Naive thymus-derived CD4-positive, alpha-beta T cell (primary cell): ENCODE measurements at regions of chrX and their contacts with region 1.

Region 1: GRCh38 chrX:118847676-118848075 is 24.1 kb downstream of the ZCCHC12 start:
- DNase-seq: peak in 7 of 9 donors; percentile 22 to 61 (median 54)
- ATAC-seq: peak; percentile 60
- H3K4me3 ChIP-seq: no peak overlapping the region
- H3K4me3 Mint-ChIP-seq: no peak overlapping the region
- H3K27ac ChIP-seq: no peak overlapping the region
- H3K27ac Mint-ChIP-seq: no peak overlapping the region
- H3K4me1 ChIP-seq: no peaks in the 10 kb centered on the region
- H3K4me1 Mint-ChIP-seq: no peaks in the 10 kb centered on the region
- H3K27me3 ChIP-seq: no peaks in the 10 kb centered on the region
- H3K27me3 Mint-ChIP-seq: peaks cover 0 to 4% (median 2%) of the 10 kb centered on the region in 5 donors

Region 2: DNA sequence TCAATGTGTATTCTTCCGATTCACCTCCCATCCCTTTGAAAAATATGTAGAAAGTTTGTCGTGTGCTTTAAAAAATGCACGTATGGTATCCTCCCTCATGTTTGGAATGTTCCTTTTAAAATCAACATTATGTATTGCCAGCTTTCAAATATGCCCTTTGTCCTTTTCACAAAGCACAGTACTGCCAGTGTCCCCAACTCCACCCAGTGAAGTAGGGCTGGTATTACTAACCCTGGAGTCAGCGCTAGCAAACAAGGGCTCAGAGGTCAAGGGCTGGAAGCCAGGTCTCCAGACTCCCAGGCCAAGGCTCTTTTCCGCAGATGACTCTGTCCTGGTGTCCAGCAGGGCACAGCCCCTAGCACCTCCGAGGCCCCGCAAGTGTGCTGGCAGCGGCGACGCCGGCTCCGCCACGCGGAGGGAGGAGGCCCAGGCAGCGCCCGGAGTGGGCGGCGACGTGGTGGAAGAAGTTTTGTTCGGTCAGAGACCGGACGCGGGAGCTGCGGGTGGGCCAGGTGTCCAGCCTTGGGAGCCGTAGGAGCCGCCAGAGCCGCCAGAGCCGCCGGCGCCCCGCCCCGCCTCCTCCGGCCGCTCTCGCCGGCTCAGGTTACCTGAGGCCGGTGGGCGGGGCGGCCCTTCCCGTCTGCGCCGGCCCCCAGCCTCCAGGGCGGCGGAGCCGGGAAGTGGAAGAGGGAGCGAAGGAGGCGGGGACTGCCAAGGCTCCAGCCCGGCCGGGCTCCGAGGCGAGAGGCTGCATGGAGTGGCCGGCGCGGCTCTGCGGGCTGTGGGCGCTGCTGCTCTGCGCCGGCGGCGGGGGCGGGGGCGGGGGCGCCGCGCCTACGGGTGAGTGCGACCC is 120.6 kb before region 1 on chrX and contains the start of gene IL13RA1:
- CTCF ChIA-PET with region 1: no interaction called
- POLR2A ChIA-PET with region 1: no interaction called
- intact Hi-C with region 1: no loop called
- DNase-seq: peak in 3 of 9 donors; percentile 7 to 36 (median 7)
- ATAC-seq: peak; percentile 60
- H3K4me3 ChIP-seq: no peak within 1 kb of the TSS
- H3K4me3 Mint-ChIP-seq: peak within 1 kb of the TSS; percentile 41 to 81 (median 66)
- H3K27ac ChIP-seq: no peak within 1 kb of the TSS
- H3K27ac Mint-ChIP-seq: peak within 1 kb of the TSS in 1 of 9 donors; percentile 18
- H3K4me1 ChIP-seq: peaks cover 0 to 5% of the 10 kb centered on the region in 2 donors
- H3K4me1 Mint-ChIP-seq: peaks cover 0 to 9% (median 0%) of the 10 kb centered on the region in 7 donors
- H3K27me3 ChIP-seq: peaks cover 0 to 6% of the 10 kb centered on the region in 2 donors
- H3K27me3 Mint-ChIP-seq: peaks cover 12 to 45% (median 22%) of the 10 kb centered on the region in 5 donors
- total RNA-seq, gene IL13RA1: 0.15 to 16.3 (median 1.7) TPM

Region 3: DNA sequence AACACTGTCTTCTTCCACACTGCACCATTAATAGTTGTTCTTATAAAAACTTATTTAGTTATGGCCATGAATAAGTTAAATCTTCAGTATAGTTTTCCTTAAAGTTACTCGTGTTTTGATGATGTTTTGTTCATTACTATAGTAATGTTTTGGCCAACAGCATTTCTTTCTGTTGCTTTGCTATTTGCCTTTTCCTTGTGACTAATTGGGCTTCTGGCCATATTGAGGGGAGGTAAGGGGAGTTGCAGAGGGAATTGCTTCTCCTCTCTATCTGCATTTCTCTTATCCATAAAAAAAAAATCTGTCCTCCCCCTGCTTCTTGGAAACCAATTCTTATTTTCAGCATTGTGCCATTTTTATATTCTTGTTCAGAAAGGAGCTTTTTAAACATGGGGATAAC is 66.8 kb before region 1 on chrX:
- CTCF ChIA-PET with region 1: no interaction called
- POLR2A ChIA-PET with region 1: no interaction called
- intact Hi-C with region 1: no loop called
- DNase-seq: no peak
- ATAC-seq: no peak
- H3K4me3 ChIP-seq: no peak overlapping the region
- H3K4me3 Mint-ChIP-seq: no peak overlapping the region
- H3K27ac ChIP-seq: no peak overlapping the region
- H3K27ac Mint-ChIP-seq: no peak overlapping the region
- H3K4me1 ChIP-seq: no peaks in the 10 kb centered on the region
- H3K4me1 Mint-ChIP-seq: no peaks in the 10 kb centered on the region
- H3K27me3 ChIP-seq: no peaks in the 10 kb centered on the region
- H3K27me3 Mint-ChIP-seq: peaks cover 0 to 4% (median 0%) of the 10 kb centered on the region in 5 donors

Region 4: DNA sequence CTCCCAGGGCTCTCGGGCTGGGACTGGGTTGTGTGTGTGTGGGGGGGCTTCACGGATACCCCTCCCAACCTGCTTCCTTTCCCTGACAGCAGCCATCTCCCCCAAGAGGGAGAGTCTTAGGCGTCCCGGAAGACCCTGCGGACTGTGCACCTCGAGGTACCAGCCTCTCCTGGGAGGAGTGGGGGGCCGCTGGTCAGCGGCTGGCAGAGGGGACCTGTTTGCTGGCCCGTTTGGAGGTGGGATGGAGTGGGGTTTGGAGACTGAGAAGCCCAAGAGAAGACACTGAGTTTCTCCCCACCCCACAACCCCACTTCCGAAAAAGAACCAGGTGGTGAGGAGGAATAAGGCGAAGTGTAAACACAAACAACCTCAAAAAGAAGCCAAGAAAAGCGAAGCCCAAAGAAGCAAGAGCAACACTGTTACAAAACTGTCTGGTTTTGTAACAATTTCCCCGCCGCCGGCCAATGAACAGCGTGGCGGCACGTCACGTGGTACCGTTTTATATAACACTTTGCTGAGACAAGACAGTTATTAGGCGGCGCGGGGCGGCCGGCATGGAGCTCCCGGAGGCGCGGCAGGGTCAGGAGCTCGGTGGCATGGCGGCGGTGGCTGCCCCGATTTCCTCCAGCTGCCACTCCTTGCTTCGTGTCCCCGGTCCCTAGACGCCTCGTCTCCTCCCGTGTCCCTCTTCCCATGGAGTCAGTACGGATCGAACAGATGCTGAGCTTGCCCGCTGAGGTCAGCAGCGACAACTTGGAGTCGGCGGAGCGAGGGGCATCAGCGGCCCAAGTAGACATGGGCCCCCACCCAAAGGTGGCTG is 126.6 kb after region 1 on chrX and contains the start of gene LONRF3:
- CTCF ChIA-PET with region 1: no interaction called
- POLR2A ChIA-PET with region 1: no interaction called
- intact Hi-C with region 1: loop called in 1 of 2 experiments (anchors 10 kb)
- DNase-seq: peak; percentile 26 to 71 (median 56)
- ATAC-seq: peak; percentile 65
- H3K4me3 ChIP-seq: peak within 1 kb of the TSS; percentile 64
- H3K4me3 Mint-ChIP-seq: peak within 1 kb of the TSS; percentile 86 to 100 (median 92)
- H3K27ac ChIP-seq: peak within 1 kb of the TSS; percentile 74
- H3K27ac Mint-ChIP-seq: peak within 1 kb of the TSS; percentile 38 to 94 (median 90)
- H3K4me1 ChIP-seq: peaks cover 0 to 3% of the 10 kb centered on the region in 2 donors
- H3K4me1 Mint-ChIP-seq: peaks cover 0 to 24% (median 17%) of the 10 kb centered on the region in 7 donors
- H3K27me3 ChIP-seq: no peaks in the 10 kb centered on the region
- H3K27me3 Mint-ChIP-seq: peaks cover 0 to 57% (median 5%) of the 10 kb centered on the region in 5 donors
- total RNA-seq, gene LONRF3: 0.07 to 17.8 (median 11.5) TPM

Region 5: GRCh38 chrX:119067023-119067739 is 219.5 kb after region 1 on chrX:
- CTCF ChIA-PET with region 1: interaction called, 11 read pairs
- POLR2A ChIA-PET with region 1: no interaction called
- intact Hi-C with region 1: loop called in 1 of 2 experiments (anchors 1 kb)
- DNase-seq: peak in 4 of 9 donors; percentile 2 to 19 (median 13)
- ATAC-seq: peak; percentile 80
- H3K4me3 ChIP-seq: no peak overlapping the region
- H3K4me3 Mint-ChIP-seq: no peak overlapping the region
- H3K27ac ChIP-seq: no peak overlapping the region
- H3K27ac Mint-ChIP-seq: no peak overlapping the region
- H3K4me1 ChIP-seq: no peaks in the 10 kb centered on the region
- H3K4me1 Mint-ChIP-seq: peaks cover 0 to 2% (median 0%) of the 10 kb centered on the region in 7 donors
- H3K27me3 ChIP-seq: no peaks in the 10 kb centered on the region
- H3K27me3 Mint-ChIP-seq: peaks cover 0 to 3% (median 0%) of the 10 kb centered on the region in 5 donors

Region 6: GRCh38 chrX:119222932-119223331 is 375.3 kb after region 1 on chrX:
- CTCF ChIA-PET with region 1: interaction called, 5 read pairs
- POLR2A ChIA-PET with region 1: no interaction called
- intact Hi-C with region 1: loop called in 1 of 2 experiments (anchors 1 kb)
- DNase-seq: no peak
- ATAC-seq: no peak
- H3K4me3 ChIP-seq: no peak overlapping the region
- H3K4me3 Mint-ChIP-seq: no peak overlapping the region
- H3K27ac ChIP-seq: no peak overlapping the region
- H3K27ac Mint-ChIP-seq: no peak overlapping the region
- H3K4me1 ChIP-seq: no peaks in the 10 kb centered on the region
- H3K4me1 Mint-ChIP-seq: peaks cover 0 to 5% (median 0%) of the 10 kb centered on the region in 7 donors
- H3K27me3 ChIP-seq: no peaks in the 10 kb centered on the region
- H3K27me3 Mint-ChIP-seq: peaks cover 0 to 34% (median 19%) of the 10 kb centered on the region in 5 donors

Region 7: GRCh38 chrX:119266364-119266995 is 418.8 kb after region 1 on chrX:
- CTCF ChIA-PET with region 1: no interaction called
- POLR2A ChIA-PET with region 1: no interaction called
- intact Hi-C with region 1: loop called in 1 of 2 experiments (anchors 1 kb)
- DNase-seq: peak in 4 of 9 donors; percentile 5 to 27 (median 14)
- ATAC-seq: no peak
- H3K4me3 ChIP-seq: no peak overlapping the region
- H3K4me3 Mint-ChIP-seq: no peak overlapping the region
- H3K27ac ChIP-seq: no peak overlapping the region
- H3K27ac Mint-ChIP-seq: no peak overlapping the region
- H3K4me1 ChIP-seq: no peaks in the 10 kb centered on the region
- H3K4me1 Mint-ChIP-seq: no peaks in the 10 kb centered on the region
- H3K27me3 ChIP-seq: no peaks in the 10 kb centered on the region
- H3K27me3 Mint-ChIP-seq: peaks cover 0 to 29% (median 0%) of the 10 kb centered on the region in 5 donors